ENCODE measurements at regions of chr19 and their contacts with region 1.

Region 1: GRCh38 chr19:42108527-42109389 is 23.5 kb downstream of the POU2F2 start:
- DNase-seq: peak; percentile 83 to 86 (median 85)
- H3K4me3 ChIP-seq: no peak overlapping the region
- H3K4me3 Mint-ChIP-seq: no peak overlapping the region
- H3K27ac ChIP-seq: no peak overlapping the region
- H3K27ac Mint-ChIP-seq: peak overlapping the region; percentile 38 to 87 (median 65)
- H3K4me1 ChIP-seq: peaks cover 6% of the 10 kb centered on the region
- H3K4me1 Mint-ChIP-seq: peaks cover 5 to 11% (median 9%) of the 10 kb centered on the region in 4 donors
- H3K27me3 ChIP-seq: no peaks in the 10 kb centered on the region
- H3K27me3 Mint-ChIP-seq: no peaks in the 10 kb centered on the region

Region 2: GRCh38 chr19:41978470-41978869 is 130.3 kb before region 1 on chr19:
- CTCF ChIA-PET with region 1: no interaction called
- POLR2A ChIA-PET with region 1: no interaction called
- intact Hi-C with region 1: no loop called
- DNase-seq: no peak
- H3K4me3 ChIP-seq: no peak overlapping the region
- H3K4me3 Mint-ChIP-seq: no peak overlapping the region
- H3K27ac ChIP-seq: no peak overlapping the region
- H3K27ac Mint-ChIP-seq: no peak overlapping the region
- H3K4me1 ChIP-seq: no peaks in the 10 kb centered on the region
- H3K4me1 Mint-ChIP-seq: no peaks in the 10 kb centered on the region
- H3K27me3 ChIP-seq: no peaks in the 10 kb centered on the region
- H3K27me3 Mint-ChIP-seq: no peaks in the 10 kb centered on the region

Region 3: GRCh38 chr19:42010245-42011126 is 98.3 kb before region 1 on chr19:
- CTCF ChIA-PET with region 1: no interaction called
- POLR2A ChIA-PET with region 1: no interaction called
- intact Hi-C with region 1: no loop called
- DNase-seq: no peak
- H3K4me3 ChIP-seq: no peak overlapping the region
- H3K4me3 Mint-ChIP-seq: no peak overlapping the region
- H3K27ac ChIP-seq: no peak overlapping the region
- H3K27ac Mint-ChIP-seq: no peak overlapping the region
- H3K4me1 ChIP-seq: no peaks in the 10 kb centered on the region
- H3K4me1 Mint-ChIP-seq: no peaks in the 10 kb centered on the region
- H3K27me3 ChIP-seq: no peaks in the 10 kb centered on the region
- H3K27me3 Mint-ChIP-seq: peaks cover 4 to 5% of the 10 kb centered on the region in 2 donors

Region 4: DNA sequence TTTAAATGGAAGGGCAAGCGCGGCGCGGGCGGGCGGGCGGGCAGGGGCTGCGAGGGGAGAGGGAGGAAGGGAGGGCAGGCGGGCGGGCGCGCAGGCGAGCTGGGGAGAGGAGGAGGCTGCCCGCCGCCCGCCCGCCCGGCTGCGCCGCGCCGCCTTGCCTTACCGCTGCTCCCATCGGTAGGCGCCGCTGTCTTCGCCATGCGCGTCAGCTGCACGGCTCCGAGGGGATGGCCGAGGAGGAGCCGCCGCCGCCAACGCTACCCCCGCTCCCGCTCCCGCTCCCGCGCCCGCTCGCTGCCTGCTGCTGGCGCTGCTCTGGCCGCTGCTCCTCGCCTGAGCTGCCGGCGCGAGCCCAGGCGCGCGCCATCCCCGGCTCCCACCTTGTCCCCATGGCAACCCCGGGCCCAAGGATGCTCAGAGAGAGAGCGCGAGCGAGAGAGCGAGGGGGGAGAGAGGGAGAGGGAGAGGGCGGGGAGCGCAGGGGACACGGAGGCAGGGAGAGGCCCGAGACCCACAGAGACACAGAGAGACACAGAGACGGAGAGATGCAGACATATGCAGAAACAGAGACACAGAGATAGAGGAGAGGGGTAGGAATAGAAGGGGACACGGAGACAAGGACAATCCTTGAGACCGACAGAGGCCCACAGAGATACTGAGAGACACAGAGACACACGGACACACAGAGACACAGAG is 68.4 kb after region 1 on chr19:
- CTCF ChIA-PET with region 1: interaction called, 81 read pairs
- POLR2A ChIA-PET with region 1: interaction called, 7 read pairs
- intact Hi-C with region 1: loop called (anchors 2 kb)
- DNase-seq: peak; percentile 75 to 79 (median 78)
- H3K4me3 ChIP-seq: peak overlapping the region in 1 of 2 donors; percentile 59
- H3K4me3 Mint-ChIP-seq: no peak overlapping the region
- H3K27ac ChIP-seq: no peak overlapping the region
- H3K27ac Mint-ChIP-seq: no peak overlapping the region
- H3K4me1 ChIP-seq: peaks cover 29% of the 10 kb centered on the region
- H3K4me1 Mint-ChIP-seq: peaks cover 10 to 29% (median 18%) of the 10 kb centered on the region in 4 donors
- H3K27me3 ChIP-seq: peaks cover 17% of the 10 kb centered on the region
- H3K27me3 Mint-ChIP-seq: peaks cover 4 to 11% of the 10 kb centered on the region in 2 donors

Region 5: DNA sequence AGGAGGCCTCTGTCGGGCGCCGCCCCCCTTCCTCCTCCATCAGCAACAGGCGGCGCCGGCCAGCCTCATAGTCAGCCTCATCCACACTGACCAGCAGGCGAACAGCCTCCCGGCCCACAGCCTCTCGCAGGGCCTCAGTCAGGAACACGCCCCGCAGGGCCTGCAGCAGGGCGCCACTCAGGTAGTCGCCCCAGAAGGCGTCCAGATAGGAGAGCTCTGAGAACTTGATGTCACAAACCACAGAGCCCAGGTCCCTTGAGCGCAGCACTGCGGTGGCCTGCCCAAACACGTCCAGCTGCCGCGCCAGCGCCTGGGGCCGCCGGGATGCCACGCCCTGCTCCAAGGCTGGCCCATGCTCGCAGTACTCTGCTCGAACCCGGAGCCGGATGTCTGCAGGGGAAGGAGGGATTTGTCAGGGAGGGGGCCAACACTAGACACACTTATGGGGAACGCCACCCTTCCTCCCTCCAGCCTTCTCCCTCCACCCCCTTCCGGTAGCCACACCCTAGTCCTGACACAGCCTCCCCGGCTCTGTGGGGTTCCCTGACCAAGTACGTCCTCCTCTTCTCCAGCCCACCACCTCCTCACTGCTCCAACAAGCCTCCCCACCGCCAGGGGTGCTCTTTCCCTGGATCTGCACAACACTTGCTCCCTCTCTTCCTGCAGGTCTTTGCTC is 90.8 kb after region 1 on chr19:
- CTCF ChIA-PET with region 1: interaction called, 11 read pairs
- POLR2A ChIA-PET with region 1: interaction called, 7 read pairs
- intact Hi-C with region 1: no loop called
- DNase-seq: peak; percentile 53 to 75 (median 65)
- H3K4me3 ChIP-seq: peak overlapping the region; percentile 43 to 49
- H3K4me3 Mint-ChIP-seq: peak overlapping the region; percentile 80 to 93 (median 88)
- H3K27ac ChIP-seq: peak overlapping the region; percentile 86
- H3K27ac Mint-ChIP-seq: peak overlapping the region; percentile 86 to 96 (median 96)
- H3K4me1 ChIP-seq: peaks cover 94% of the 10 kb centered on the region
- H3K4me1 Mint-ChIP-seq: peaks cover 63 to 93% (median 78%) of the 10 kb centered on the region in 4 donors
- H3K27me3 ChIP-seq: no peaks in the 10 kb centered on the region
- H3K27me3 Mint-ChIP-seq: no peaks in the 10 kb centered on the region

Region 6: DNA sequence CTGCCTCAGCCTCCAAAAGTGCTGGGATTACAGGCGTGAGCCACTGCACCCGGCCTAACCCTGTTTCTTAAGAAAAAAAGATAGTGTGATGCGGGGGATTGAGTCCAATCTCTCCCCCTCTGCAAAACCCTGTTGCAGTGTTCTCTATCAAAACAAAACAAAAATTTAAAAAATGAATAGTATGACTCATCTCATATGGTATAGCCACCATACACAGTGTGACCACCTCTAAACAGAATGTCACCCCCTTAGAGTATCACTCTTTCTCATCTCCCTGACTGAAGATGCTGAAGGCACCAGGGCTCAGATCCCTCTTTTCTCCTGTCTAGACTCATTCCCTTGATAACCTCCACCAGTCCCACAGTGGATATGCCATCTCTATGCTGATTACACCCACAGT is 153.0 kb after region 1 on chr19:
- CTCF ChIA-PET with region 1: no interaction called
- POLR2A ChIA-PET with region 1: no interaction called
- intact Hi-C with region 1: no loop called
- DNase-seq: no peak
- H3K4me3 ChIP-seq: no peak overlapping the region
- H3K4me3 Mint-ChIP-seq: no peak overlapping the region
- H3K27ac ChIP-seq: no peak overlapping the region
- H3K27ac Mint-ChIP-seq: peak overlapping the region in 1 of 7 donors; percentile 59
- H3K4me1 ChIP-seq: no peaks in the 10 kb centered on the region
- H3K4me1 Mint-ChIP-seq: peaks cover 0 to 4% (median 1%) of the 10 kb centered on the region in 4 donors
- H3K27me3 ChIP-seq: no peaks in the 10 kb centered on the region
- H3K27me3 Mint-ChIP-seq: no peaks in the 10 kb centered on the region

Region 7: GRCh38 chr19:42283143-42284065 is 174.6 kb after region 1 on chr19:
- CTCF ChIA-PET with region 1: interaction called, 17 read pairs
- POLR2A ChIA-PET with region 1: no interaction called
- intact Hi-C with region 1: loop called (anchors 1 kb)
- DNase-seq: peak; percentile 96 to 98 (median 97)
- H3K4me3 ChIP-seq: peak overlapping the region; percentile 1 to 60
- H3K4me3 Mint-ChIP-seq: no peak overlapping the region
- H3K27ac ChIP-seq: peak overlapping the region; percentile 77
- H3K27ac Mint-ChIP-seq: no peak overlapping the region
- H3K4me1 ChIP-seq: peaks cover 54% of the 10 kb centered on the region
- H3K4me1 Mint-ChIP-seq: peaks cover 32 to 37% (median 33%) of the 10 kb centered on the region in 4 donors
- H3K27me3 ChIP-seq: no peaks in the 10 kb centered on the region
- H3K27me3 Mint-ChIP-seq: no peaks in the 10 kb centered on the region

Region 8: DNA sequence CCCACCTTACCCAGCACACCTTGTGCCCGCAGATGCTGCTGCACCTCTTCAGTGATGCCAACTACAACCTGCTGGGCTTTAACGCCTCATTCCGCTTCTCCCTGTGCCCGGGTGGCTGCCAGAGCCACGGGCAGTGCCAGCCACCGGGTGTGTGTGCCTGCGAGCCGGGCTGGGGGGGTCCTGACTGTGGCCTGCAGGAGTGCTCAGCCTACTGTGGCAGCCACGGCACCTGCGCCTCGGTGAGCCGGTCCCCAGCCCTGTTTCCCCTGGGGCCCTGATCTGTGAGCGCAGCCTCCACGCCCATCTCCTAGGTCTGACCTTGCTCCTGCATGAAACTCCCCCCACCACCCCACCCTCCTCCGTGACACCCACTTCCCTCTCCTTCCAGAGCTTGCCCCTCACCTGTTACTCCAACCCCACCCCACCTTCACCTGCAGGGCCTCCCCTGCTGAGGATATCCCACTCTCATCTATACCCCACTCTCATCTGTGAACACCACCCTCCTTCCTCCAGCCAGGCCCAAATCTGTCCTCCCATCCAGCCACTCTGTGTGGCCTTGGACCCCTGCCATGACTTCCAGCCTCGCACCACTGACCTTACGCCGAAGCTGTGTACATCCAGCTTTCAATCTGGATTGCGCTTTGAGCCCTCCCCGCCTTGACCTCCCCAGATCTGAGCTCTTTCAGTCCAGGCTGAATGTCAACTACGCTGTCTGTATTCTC is 225.4 kb after region 1 on chr19:
- CTCF ChIA-PET with region 1: no interaction called
- POLR2A ChIA-PET with region 1: no interaction called
- intact Hi-C with region 1: no loop called
- DNase-seq: no peak
- H3K4me3 ChIP-seq: no peak overlapping the region
- H3K4me3 Mint-ChIP-seq: no peak overlapping the region
- H3K27ac ChIP-seq: no peak overlapping the region
- H3K27ac Mint-ChIP-seq: no peak overlapping the region
- H3K4me1 ChIP-seq: no peaks in the 10 kb centered on the region
- H3K4me1 Mint-ChIP-seq: no peaks in the 10 kb centered on the region
- H3K27me3 ChIP-seq: no peaks in the 10 kb centered on the region
- H3K27me3 Mint-ChIP-seq: no peaks in the 10 kb centered on the region

Region 9: GRCh38 chr19:42401365-42402303 is 292.9 kb after region 1 on chr19:
- CTCF ChIA-PET with region 1: interaction called, 6 read pairs
- POLR2A ChIA-PET with region 1: no interaction called
- intact Hi-C with region 1: loop called (anchors 1 kb)
- DNase-seq: peak; percentile 63 to 79 (median 68)
- H3K4me3 ChIP-seq: peak overlapping the region; percentile 23 to 52
- H3K4me3 Mint-ChIP-seq: peak overlapping the region; percentile 82 to 91 (median 84)
- H3K27ac ChIP-seq: peak overlapping the region; percentile 29
- H3K27ac Mint-ChIP-seq: peak overlapping the region; percentile 64 to 88 (median 78)
- H3K4me1 ChIP-seq: peaks cover 30% of the 10 kb centered on the region
- H3K4me1 Mint-ChIP-seq: peaks cover 26 to 53% (median 39%) of the 10 kb centered on the region in 4 donors
- H3K27me3 ChIP-seq: no peaks in the 10 kb centered on the region
- H3K27me3 Mint-ChIP-seq: no peaks in the 10 kb centered on the region

Region 10: GRCh38 chr19:42440357-42441048 is 331.7 kb after region 1 on chr19:
- CTCF ChIA-PET with region 1: interaction called, 27 read pairs
- POLR2A ChIA-PET with region 1: interaction called, 3 read pairs
- intact Hi-C with region 1: no loop called
- DNase-seq: peak; percentile 71 to 76 (median 74)
- H3K4me3 ChIP-seq: no peak overlapping the region
- H3K4me3 Mint-ChIP-seq: peak overlapping the region in 7 of 8 donors; percentile 15 to 87 (median 62)
- H3K27ac ChIP-seq: no peak overlapping the region
- H3K27ac Mint-ChIP-seq: peak overlapping the region; percentile 28 to 92 (median 79)
- H3K4me1 ChIP-seq: peaks cover 27% of the 10 kb centered on the region
- H3K4me1 Mint-ChIP-seq: peaks cover 21 to 42% (median 33%) of the 10 kb centered on the region in 4 donors
- H3K27me3 ChIP-seq: no peaks in the 10 kb centered on the region
- H3K27me3 Mint-ChIP-seq: no peaks in the 10 kb centered on the region

Measured in CD4-positive, alpha-beta memory T cell (primary cell).